HepG2 (cell line): ENCODE measurements at regions of chr7 and their contacts with region 1.

Region 1: DNA sequence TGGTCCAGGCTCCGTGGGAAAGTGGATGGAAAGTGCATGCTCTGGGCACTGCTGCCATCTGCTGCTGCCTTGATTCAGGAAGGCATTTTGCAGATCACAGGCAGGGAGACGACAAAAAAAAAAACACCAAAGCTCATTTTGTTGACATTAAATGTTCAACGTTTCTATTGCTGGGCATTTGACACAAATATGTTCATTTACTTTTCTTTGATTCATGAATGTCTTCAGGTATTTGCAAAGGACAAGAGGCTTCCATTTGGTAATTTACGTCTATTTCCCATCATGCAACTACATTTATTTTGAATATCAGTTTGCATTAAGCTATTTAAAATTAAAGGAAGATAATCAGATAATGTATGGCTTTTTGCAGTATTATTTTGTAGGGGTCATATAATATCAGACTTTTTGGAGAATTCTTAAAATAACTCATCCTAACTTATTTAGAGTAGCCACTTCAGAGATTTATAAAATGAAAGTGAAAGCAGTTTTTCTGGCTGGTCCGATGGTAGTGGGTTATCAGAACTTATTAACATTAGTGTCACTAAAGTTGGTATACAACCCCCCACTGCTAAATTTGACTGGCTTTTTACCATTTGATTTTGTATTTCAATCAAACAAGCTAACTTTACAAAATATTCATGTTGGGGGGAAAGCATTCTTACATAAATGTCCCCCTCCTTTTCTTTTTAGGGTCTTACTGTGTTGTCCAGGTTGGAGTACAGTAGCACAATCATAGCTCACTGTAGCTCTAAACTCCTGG is 65.3 kb downstream of the PDIA4 start:
- DNase-seq: peak; percentile 45
- ATAC-seq: peak; percentile 3; the same call in 2 of the 3 replicates
- H3K4me3 ChIP-seq: peak overlapping the region; percentile 70 to 81 (median 71)
- H3K27ac ChIP-seq: peak overlapping the region; percentile 53
- H3K4me1 ChIP-seq: peaks cover 60% of the 10 kb centered on the region
- H3K27me3 ChIP-seq: no peaks in the 10 kb centered on the region; a peak in 2 of 5 replicates
- CTCF ChIP-seq: peak; percentile 93
- EP300 ChIP-seq: no peak
- POLR2A ChIP-seq: no peak
- RAD21 ChIP-seq: peak; percentile 48

Region 2: GRCh38 chr7:148262721-148263229 is 700.2 kb before region 1 on chr7:
- CTCF ChIA-PET with region 1: no interaction called
- POLR2A ChIA-PET with region 1: no interaction called
- in situ Hi-C with region 1: loop called (anchors 25 kb)
- intact Hi-C with region 1: loop called (anchors 5 kb)
- DNase-seq: peak; percentile 17
- ATAC-seq: peak; percentile 94
- H3K4me3 ChIP-seq: peak overlapping the region in 1 of 3 experiments; percentile 51; a peak in 2 of 6 replicates
- H3K27ac ChIP-seq: no peak overlapping the region
- H3K4me1 ChIP-seq: no peaks in the 10 kb centered on the region
- H3K27me3 ChIP-seq: peaks cover 0 to 13% of the 10 kb centered on the region in 2 experiments; a peak in 1 of 5 replicates
- CTCF ChIP-seq: peak; percentile 92
- EP300 ChIP-seq: no peak
- POLR2A ChIP-seq: no peak
- RAD21 ChIP-seq: peak; percentile 59

Region 3: GRCh38 chr7:148575640-148576411 is 387.2 kb before region 1 on chr7:
- CTCF ChIA-PET with region 1: interaction called, 15 read pairs
- POLR2A ChIA-PET with region 1: no interaction called
- in situ Hi-C with region 1: loop called (anchors 5 kb)
- intact Hi-C with region 1: loop called (anchors 1 kb)
- DNase-seq: peak; percentile 39
- ATAC-seq: peak; percentile 95
- H3K4me3 ChIP-seq: no peak overlapping the region
- H3K27ac ChIP-seq: no peak overlapping the region
- H3K4me1 ChIP-seq: no peaks in the 10 kb centered on the region
- H3K27me3 ChIP-seq: no peaks in the 10 kb centered on the region; a peak in 1 of 5 replicates
- CTCF ChIP-seq: peak; percentile 85
- EP300 ChIP-seq: no peak
- POLR2A ChIP-seq: no peak
- RAD21 ChIP-seq: peak; percentile 70; the same call in 1 of the 2 replicates

Region 4: GRCh38 chr7:148793590-148793989 is 169.4 kb before region 1 on chr7:
- CTCF ChIA-PET with region 1: no interaction called
- POLR2A ChIA-PET with region 1: no interaction called
- in situ Hi-C with region 1: no loop called
- intact Hi-C with region 1: loop called (anchors 5 kb)
- DNase-seq: no peak
- ATAC-seq: no peak
- H3K4me3 ChIP-seq: no peak overlapping the region
- H3K27ac ChIP-seq: no peak overlapping the region
- H3K4me1 ChIP-seq: no peaks in the 10 kb centered on the region
- H3K27me3 ChIP-seq: no peaks in the 10 kb centered on the region
- CTCF ChIP-seq: no peak
- EP300 ChIP-seq: no peak
- POLR2A ChIP-seq: no peak
- RAD21 ChIP-seq: no peak

Region 5: DNA sequence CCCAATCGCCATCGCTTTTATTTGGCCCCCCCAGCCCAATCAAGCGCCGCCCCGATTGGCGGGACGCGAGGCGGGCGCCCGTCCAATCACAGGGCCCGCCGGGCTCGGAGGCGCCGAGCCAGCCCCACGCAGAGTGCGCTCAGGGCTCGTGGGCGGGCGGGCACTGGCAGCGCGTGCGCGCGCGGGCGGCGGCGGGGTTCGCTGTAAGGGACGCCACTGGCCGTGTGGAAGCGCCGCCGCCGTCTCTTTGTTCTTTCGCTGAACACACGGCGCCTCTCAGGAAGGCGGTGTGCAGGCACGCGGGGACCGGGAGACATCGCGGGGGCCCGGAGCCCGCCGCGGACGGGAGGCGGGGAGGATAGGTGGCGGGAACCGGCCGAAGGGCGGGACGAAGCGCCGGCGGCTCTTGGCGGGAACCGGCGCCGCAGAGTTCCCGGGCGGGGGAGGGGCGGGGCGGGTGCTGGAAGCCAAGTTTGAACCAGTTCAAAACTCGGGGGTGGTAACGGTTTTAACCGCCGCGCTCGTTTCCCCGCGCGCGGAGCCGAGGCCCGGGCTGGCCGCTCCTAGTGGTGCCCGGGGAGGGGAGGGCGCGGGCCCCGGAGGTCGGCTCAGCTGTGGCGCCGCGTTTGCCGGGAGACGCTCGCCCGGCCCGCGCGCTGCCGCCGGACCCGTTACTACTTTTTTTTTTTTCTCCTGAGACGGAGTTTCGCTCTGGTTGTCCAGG is 78.5 kb before region 1 on chr7:
- CTCF ChIA-PET with region 1: no interaction called
- POLR2A ChIA-PET with region 1: no interaction called
- in situ Hi-C with region 1: no loop called
- intact Hi-C with region 1: loop called (anchors 5 kb)
- DNase-seq: peak; percentile 80
- ATAC-seq: peak; percentile 97
- H3K4me3 ChIP-seq: peak overlapping the region; percentile 87 to 99 (median 98)
- H3K27ac ChIP-seq: peak overlapping the region; percentile 95
- H3K4me1 ChIP-seq: peaks cover 29% of the 10 kb centered on the region
- H3K27me3 ChIP-seq: no peaks in the 10 kb centered on the region
- CTCF ChIP-seq: no peak
- EP300 ChIP-seq: peak in 1 of 2 experiments; percentile 15; a peak in 1 of 4 replicates
- POLR2A ChIP-seq: peak; percentile 55 to 85; a peak in 3 of 4 replicates
- RAD21 ChIP-seq: peak; percentile 21

Region 6: DNA sequence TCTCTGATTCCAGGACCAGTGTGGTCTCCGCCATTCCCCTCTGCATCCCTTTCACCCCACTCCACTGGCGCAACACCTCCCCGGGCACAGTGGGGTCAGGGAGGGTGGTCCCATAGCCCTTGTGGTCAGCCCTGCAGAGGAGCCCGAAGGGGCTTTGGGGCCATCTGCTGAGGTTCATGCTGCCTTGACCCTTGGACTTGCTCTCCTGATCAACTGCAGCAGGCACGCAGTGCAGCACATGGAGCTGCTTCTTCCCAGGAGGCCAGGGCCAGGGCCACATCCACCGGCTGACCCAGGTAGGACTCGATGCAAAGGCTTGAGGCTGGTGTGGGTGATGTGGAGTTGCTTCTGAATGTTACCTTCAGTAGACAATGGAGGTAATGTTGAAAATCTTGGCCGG is 30.2 kb after region 1 on chr7:
- CTCF ChIA-PET with region 1: no interaction called
- POLR2A ChIA-PET with region 1: no interaction called
- in situ Hi-C with region 1: no loop called
- intact Hi-C with region 1: no loop called
- DNase-seq: no peak
- ATAC-seq: peak; percentile 49
- H3K4me3 ChIP-seq: no peak overlapping the region
- H3K27ac ChIP-seq: no peak overlapping the region
- H3K4me1 ChIP-seq: peaks cover 25% of the 10 kb centered on the region
- H3K27me3 ChIP-seq: no peaks in the 10 kb centered on the region; a peak in 1 of 5 replicates
- CTCF ChIP-seq: no peak
- EP300 ChIP-seq: no peak
- POLR2A ChIP-seq: no peak
- RAD21 ChIP-seq: no peak